Panc1 (cell line): ENCODE measurements at regions of chr3 and their contacts with region 1.

Region 1: DNA sequence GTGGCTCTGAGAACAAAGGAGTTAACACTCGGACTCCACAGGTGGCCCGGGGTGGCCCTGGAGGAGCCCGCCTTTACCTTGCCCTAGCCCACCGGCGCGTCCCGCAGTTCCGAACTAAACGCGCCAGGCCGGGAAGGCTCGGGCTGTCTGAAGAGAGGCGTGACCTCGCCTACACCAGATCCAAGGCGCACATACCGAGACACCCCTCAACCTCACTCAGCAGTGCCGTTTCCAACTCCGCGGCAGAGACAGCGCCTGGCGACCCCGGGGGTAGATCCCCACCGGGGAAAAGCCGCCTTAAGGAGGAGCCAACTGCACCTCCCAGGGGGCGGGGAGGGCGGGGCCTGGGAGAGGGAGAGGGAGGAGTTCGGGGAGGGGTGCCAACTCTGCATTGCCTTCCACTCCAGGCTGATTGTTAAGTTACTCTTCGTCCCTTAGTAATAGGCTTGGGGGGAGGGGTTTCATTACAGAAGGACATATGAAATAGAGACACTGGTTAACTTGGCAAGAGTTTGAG is at the start of gene DLG1:
- DNase-seq: peak; percentile 83
- ATAC-seq: peak; percentile 91
- H3K4me3 ChIP-seq: peak within 1 kb of the TSS; percentile 67 to 90
- H3K27ac ChIP-seq: peak within 1 kb of the TSS; percentile 87
- H3K4me1 ChIP-seq: peaks cover 20% of the 10 kb centered on the region
- H3K27me3 ChIP-seq: no peaks in the 10 kb centered on the region
- CTCF ChIP-seq: no peak
- total RNA-seq, gene DLG1: 90.2 TPM

Region 2: DNA sequence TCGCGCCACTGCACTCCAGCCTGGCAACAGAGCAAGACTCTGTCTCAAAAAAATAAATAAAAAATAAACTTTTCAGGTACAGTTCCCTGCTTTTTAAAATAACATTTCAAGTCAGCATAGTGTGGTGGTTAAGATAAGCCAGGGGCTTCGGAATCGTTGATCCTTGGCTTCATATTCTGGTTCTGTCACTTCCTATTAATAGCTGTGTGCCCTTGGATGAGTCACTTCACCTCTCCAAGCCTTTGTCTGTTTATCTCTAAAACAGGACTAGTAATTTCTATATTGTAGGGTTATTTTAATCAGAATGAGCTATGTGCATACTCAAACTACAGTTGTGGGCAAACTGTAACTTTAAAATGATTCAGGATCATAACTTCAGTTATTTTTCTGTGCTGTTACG is 484.5 kb before region 1 on chr3:
- CTCF ChIA-PET with region 1: no interaction called
- POLR2A ChIA-PET with region 1: no interaction called
- in situ Hi-C with region 1: no loop called
- intact Hi-C with region 1: no loop called
- DNase-seq: no peak
- ATAC-seq: no peak
- H3K4me3 ChIP-seq: no peak overlapping the region
- H3K27ac ChIP-seq: no peak overlapping the region
- H3K4me1 ChIP-seq: no peaks in the 10 kb centered on the region; the same call in 1 of the 2 replicates
- H3K27me3 ChIP-seq: no peaks in the 10 kb centered on the region
- CTCF ChIP-seq: no peak

Region 3: DNA sequence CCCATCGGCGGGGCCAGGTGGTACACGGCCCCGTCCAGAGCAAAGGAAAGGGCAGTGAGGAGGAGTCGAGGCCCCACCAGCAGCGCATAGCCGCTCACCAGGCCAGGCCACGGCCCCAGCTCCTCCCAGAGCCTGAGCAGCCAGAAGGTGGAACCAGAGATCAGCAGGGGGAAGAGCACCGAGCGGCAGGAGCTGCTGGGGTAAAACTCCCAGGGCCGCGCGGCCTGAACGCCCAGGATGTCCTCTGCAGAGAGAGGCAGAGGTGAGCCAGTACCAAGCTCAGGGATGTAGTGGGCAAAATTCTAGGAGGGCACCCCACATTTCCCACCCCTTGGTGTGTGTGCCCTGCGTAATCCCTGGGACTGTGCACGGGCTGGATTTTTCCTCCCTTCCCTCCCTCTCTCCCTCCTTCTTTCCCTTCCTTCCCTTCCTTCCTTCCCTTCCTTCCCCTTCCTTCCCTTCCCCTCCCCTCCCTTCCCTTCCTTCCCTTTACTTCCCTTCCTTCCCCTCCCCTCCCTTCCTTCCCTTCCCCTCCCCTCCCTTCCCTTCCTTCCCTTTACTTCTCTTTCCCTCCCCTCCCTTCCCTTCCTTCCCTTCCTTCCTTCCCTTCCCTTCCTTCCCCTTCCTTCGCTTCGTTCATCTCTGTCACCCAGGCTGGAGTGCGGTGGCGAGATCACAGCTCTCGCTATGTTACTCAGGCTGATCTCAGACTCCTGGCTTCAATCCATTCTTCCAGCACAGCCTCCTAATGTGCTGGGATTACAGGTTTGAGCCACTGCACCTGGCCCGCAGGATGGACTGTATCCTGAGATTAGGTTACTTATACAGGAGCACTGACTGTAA is 349.7 kb before region 1 on chr3:
- CTCF ChIA-PET with region 1: interaction called, 20 read pairs
- POLR2A ChIA-PET with region 1: no interaction called
- in situ Hi-C with region 1: no loop called
- intact Hi-C with region 1: no loop called
- DNase-seq: no peak
- ATAC-seq: peak; percentile 71
- H3K4me3 ChIP-seq: no peak overlapping the region
- H3K27ac ChIP-seq: no peak overlapping the region
- H3K4me1 ChIP-seq: 0 out of 2 replicates have a peak, but pooled peaks cover 2% of the 10 kb centered on the region
- H3K27me3 ChIP-seq: no peaks in the 10 kb centered on the region
- CTCF ChIP-seq: no peak; the same call in 1 of the 2 replicates

Region 4: GRCh38 chr3:196969660-196970546 is 328.5 kb before region 1 on chr3:
- CTCF ChIA-PET with region 1: no interaction called
- POLR2A ChIA-PET with region 1: no interaction called
- in situ Hi-C with region 1: no loop called
- intact Hi-C with region 1: no loop called
- DNase-seq: no peak
- ATAC-seq: peak; percentile 88
- H3K4me3 ChIP-seq: peak overlapping the region; percentile 52 to 72
- H3K27ac ChIP-seq: no peak overlapping the region
- H3K4me1 ChIP-seq: peaks cover 12% of the 10 kb centered on the region
- H3K27me3 ChIP-seq: no peaks in the 10 kb centered on the region
- CTCF ChIP-seq: peak; percentile 100

Region 5: GRCh38 chr3:197456261-197457091 is 158.1 kb after region 1 on chr3:
- CTCF ChIA-PET with region 1: interaction called, 3 read pairs
- POLR2A ChIA-PET with region 1: no interaction called
- in situ Hi-C with region 1: no loop called
- intact Hi-C with region 1: loop called (anchors 10 kb)
- DNase-seq: no peak
- ATAC-seq: peak; percentile 88
- H3K4me3 ChIP-seq: peak overlapping the region; percentile 48 to 61
- H3K27ac ChIP-seq: peak overlapping the region; percentile 79
- H3K4me1 ChIP-seq: peaks cover 5% of the 10 kb centered on the region; the same call in 1 of the 2 replicates
- H3K27me3 ChIP-seq: no peaks in the 10 kb centered on the region
- CTCF ChIP-seq: no peak